GM23248 (cell line): ENCODE measurements at regions of chr10 and their contacts with region 1.

Region 1: GRCh38 chr10:69392481-69393000 is 24.2 kb downstream of the TACR2 start:
- DNase-seq: peak; percentile 91
- H3K4me3 ChIP-seq: no peak overlapping the region
- H3K27ac ChIP-seq: no peak overlapping the region
- H3K4me1 ChIP-seq: peaks cover 7% of the 10 kb centered on the region
- H3K27me3 ChIP-seq: no peaks in the 10 kb centered on the region

Region 2: GRCh38 chr10:69232252-69232651 is 160.3 kb before region 1 on chr10:
- in situ Hi-C with region 1: loop called (anchors 5 kb)
- DNase-seq: peak; percentile 91
- H3K4me3 ChIP-seq: no peak overlapping the region
- H3K27ac ChIP-seq: peak overlapping the region; percentile 22; the same call in 1 of the 2 replicates
- H3K4me1 ChIP-seq: peaks cover 12% of the 10 kb centered on the region
- H3K27me3 ChIP-seq: no peaks in the 10 kb centered on the region

Region 3: DNA sequence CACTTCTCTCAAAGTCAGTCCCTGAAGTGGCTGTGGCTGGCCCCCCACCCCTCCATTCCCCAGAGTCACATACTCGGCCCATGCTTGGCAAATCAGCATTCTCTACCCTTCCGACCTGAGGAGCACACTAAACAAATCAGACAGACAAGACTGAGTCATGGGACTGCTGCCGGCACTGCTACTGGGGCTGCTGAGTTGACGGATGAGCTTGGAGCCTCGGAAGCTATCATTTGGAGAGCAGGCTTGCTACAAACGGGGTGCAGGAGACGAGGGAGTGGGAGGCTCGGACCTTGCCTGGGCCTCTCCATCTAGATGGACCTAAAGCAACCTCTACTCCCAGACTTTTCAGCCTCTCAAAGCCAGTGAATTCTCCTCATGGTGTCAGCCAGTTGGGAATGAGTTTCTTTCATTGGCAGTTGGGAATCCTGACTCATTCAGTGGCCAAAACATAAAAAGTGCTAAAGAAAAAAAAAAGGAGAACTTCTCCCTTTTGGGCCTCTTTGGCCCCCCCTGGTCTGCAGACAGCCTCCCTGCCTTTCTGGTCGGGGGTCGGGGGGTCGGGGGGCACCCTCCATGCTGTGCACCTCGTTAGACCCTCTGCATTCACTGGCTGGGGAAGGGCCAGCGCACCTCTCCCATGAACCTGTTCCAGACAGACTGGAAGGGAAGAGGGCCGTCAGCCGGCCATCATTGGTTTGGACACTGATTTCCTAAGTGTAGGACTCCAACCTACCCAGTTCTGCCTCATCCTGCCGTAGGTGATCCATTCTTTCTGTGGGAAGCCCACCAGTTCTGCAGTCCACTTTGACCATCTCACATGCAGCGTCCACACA is 356.9 kb after region 1 on chr10:
- in situ Hi-C with region 1: no loop called
- DNase-seq: peak; percentile 69
- H3K4me3 ChIP-seq: no peak overlapping the region
- H3K27ac ChIP-seq: peak overlapping the region; percentile 24; the same call in 1 of the 2 replicates
- H3K4me1 ChIP-seq: peaks cover 11% of the 10 kb centered on the region; the same call in 1 of the 2 replicates
- H3K27me3 ChIP-seq: peaks cover 18% of the 10 kb centered on the region; the same call in 1 of the 2 replicates